CD4-positive, alpha-beta memory T cell (primary cell): ENCODE measurements at regions of chr10 and their contacts with region 1.

Region 1: DNA sequence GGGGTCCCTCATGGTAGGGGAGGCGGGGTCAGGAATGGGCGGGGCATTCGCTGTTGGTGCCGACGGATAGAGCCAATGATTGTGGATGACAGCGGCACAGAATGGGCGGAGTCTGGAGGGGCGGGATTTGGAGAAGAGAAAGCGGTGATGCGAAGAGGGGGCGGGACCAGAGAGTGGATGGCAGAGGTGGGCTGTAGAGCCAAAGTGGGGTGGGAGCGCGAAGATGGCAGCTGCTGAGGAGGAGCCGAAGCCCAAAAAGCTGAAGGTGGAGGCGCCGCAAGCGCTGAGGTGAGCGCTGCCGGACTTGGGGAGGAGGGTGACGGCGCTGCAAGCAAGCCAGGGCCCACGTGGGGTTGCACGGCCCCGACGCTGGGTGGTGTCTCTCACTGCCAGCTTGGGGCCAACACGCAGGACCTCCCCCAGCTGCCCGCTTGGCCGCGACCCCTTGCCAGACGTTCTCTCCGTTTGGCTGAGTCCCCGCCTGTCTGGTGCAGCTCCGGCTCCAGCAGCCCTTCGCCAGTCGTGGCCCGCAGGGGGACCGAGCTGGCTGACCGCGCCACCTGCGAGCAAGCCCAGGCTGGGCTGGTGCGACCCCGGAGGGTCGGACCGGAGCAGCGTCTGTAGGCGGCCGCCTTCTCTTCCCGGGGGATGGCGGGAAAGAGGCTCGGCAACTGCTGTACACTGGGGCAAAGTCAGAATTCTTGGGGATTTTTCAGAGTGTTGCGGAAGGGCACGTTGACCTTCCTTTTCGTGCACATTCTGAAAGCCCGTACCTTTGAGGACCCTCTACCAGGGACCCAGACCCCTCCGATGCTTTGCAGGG is at the start of gene ADK:
- DNase-seq: peak; percentile 99 to 100 (median 99)
- H3K4me3 ChIP-seq: peak within 1 kb of the TSS; percentile 91 to 95
- H3K4me3 Mint-ChIP-seq: no peak within 1 kb of the TSS
- H3K27ac ChIP-seq: peak within 1 kb of the TSS; percentile 84
- H3K27ac Mint-ChIP-seq: peak within 1 kb of the TSS; percentile 7 to 89 (median 78)
- H3K4me1 ChIP-seq: peaks cover 39% of the 10 kb centered on the region
- H3K4me1 Mint-ChIP-seq: peaks cover 24 to 49% (median 36%) of the 10 kb centered on the region in 4 donors
- H3K27me3 ChIP-seq: no peaks in the 10 kb centered on the region
- H3K27me3 Mint-ChIP-seq: no peaks in the 10 kb centered on the region
- total RNA-seq, gene ADK: 33.7 to 38.5 TPM

Region 2: DNA sequence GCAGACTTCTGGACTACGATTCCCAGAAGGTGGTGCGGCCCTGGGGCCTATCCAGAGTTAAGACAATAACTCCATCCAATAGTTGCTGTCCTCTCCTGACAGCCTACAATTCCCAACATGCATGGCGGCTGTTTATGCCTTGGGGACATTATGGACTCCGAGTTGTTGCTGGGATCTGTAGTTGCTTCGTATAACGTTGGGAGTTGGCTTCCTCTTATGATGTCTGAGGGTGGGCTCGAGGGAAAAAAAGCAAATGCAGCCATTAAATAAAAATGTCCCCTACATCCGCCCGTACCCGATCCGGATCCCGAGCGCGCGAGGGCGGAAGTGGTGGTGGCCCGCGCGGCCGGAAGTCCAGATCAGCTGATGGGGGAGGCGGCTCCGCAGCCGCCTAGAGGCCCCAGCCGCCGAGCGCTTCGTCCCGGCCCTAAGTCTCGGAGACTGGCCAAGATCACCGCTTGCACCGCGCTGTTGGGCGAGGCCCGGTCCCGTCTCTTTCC is 366.0 kb before region 1 on chr10 and contains the start of gene ZSWIM8:
- CTCF ChIA-PET with region 1: no interaction called
- POLR2A ChIA-PET with region 1: interaction called, 3 read pairs
- intact Hi-C with region 1: loop called (anchors 1 kb)
- DNase-seq: peak; percentile 85 to 96 (median 89)
- H3K4me3 ChIP-seq: peak within 1 kb of the TSS; percentile 62 to 64
- H3K4me3 Mint-ChIP-seq: peak within 1 kb of the TSS; percentile 94 to 99 (median 98)
- H3K27ac ChIP-seq: peak within 1 kb of the TSS; percentile 77
- H3K27ac Mint-ChIP-seq: peak within 1 kb of the TSS; percentile 95 to 99 (median 99)
- H3K4me1 ChIP-seq: peaks cover 54% of the 10 kb centered on the region
- H3K4me1 Mint-ChIP-seq: peaks cover 35 to 67% (median 50%) of the 10 kb centered on the region in 4 donors
- H3K27me3 ChIP-seq: no peaks in the 10 kb centered on the region
- H3K27me3 Mint-ChIP-seq: peaks cover 2% of the 10 kb centered on the region in 2 donors
- total RNA-seq, gene ZSWIM8: 93.3 to 100 TPM

Region 3: DNA sequence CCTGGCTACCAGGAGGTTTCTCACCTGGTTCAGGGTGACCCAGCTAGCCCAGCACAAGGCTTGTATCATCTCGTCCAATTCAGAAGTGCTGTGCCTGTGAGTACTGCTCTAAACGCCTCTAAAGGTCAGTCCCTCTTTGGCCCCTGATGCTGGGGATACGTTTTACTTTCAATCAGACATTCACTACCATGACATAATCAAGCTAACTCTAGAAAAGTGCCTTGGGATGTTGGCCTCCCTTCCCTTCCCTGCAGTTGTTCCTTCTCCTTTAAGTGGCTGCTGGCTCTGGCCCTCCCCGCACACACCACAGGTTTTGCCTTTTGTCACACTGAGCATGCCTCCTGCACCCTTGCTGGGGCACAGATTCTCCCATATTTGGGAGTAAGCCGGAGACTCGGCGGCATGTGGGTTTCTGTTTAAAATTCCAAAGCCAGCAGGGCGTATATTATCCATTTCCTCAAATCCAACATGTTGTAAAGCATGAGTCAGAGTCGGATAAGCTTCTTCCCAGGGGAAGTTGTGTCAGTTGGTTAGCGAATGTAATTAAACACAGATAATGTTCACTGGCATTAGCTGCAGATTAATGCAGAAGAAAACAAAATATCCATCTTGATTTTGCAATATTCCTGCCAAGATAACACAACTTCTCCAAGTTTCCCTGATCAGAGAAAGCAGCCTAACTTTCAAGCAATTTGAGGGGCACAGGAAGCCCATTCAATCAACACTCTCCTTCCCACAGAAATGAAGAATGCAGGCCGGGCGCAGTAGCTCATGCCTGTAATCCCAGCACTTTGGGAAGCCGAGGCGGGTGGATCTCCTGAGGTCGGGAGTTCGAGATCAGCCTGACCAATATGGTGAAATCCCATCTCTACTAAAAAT is 185.1 kb before region 1 on chr10:
- CTCF ChIA-PET with region 1: no interaction called
- POLR2A ChIA-PET with region 1: no interaction called
- intact Hi-C with region 1: no loop called
- DNase-seq: no peak
- H3K4me3 ChIP-seq: no peak overlapping the region
- H3K4me3 Mint-ChIP-seq: no peak overlapping the region
- H3K27ac ChIP-seq: no peak overlapping the region
- H3K27ac Mint-ChIP-seq: no peak overlapping the region
- H3K4me1 ChIP-seq: peaks cover 4% of the 10 kb centered on the region
- H3K4me1 Mint-ChIP-seq: peaks cover 3 to 17% (median 12%) of the 10 kb centered on the region in 4 donors
- H3K27me3 ChIP-seq: no peaks in the 10 kb centered on the region
- H3K27me3 Mint-ChIP-seq: no peaks in the 10 kb centered on the region

Region 4: DNA sequence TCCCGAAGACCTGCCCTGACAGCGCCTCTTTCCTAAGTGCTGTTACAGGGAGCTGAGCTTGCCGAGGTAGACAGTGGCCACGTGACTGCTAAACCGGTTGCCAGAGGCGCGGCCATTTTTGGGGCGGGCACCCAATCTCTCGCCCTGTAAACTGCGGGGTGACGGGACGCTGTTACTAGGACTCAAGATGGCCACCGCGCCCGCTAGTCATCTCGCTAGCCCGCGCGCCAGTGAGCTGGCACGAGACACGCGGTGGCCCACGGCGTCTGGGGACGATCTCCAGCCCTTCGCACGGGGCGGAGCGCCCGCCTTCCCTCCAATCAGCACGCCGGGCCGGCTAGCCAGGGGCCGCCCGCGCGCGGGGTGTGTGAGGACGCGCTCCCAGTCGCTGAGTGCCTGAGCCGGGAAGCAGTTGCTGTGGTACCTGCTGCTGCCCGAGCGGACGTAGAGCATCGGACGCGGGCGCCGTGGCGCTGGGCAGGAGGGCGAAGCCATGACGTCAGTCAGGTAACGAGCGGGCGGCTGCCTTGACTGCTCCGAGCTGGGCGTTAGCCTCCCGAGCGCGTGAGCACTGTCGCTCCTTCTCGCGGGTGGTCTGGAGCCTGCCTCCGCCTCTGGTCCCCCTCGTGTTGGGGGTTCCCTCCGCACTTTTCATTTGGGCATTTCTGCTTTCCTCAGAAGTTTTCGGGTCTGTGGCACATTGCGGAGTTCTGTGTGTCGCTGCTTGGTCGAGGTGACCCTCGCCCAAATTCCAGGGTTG is 25.3 kb after region 1 on chr10:
- CTCF ChIA-PET with region 1: interaction called, 5 read pairs
- POLR2A ChIA-PET with region 1: interaction called, 46 read pairs
- intact Hi-C with region 1: loop called (anchors 1 kb)
- DNase-seq: peak; percentile 95 to 98 (median 97)
- H3K4me3 ChIP-seq: peak overlapping the region; percentile 82 to 92
- H3K4me3 Mint-ChIP-seq: peak overlapping the region; percentile 90 to 94 (median 93)
- H3K27ac ChIP-seq: peak overlapping the region; percentile 76
- H3K27ac Mint-ChIP-seq: peak overlapping the region; percentile 96 to 98 (median 97)
- H3K4me1 ChIP-seq: peaks cover 42% of the 10 kb centered on the region
- H3K4me1 Mint-ChIP-seq: peaks cover 24 to 49% (median 39%) of the 10 kb centered on the region in 4 donors
- H3K27me3 ChIP-seq: no peaks in the 10 kb centered on the region
- H3K27me3 Mint-ChIP-seq: no peaks in the 10 kb centered on the region

Region 5: DNA sequence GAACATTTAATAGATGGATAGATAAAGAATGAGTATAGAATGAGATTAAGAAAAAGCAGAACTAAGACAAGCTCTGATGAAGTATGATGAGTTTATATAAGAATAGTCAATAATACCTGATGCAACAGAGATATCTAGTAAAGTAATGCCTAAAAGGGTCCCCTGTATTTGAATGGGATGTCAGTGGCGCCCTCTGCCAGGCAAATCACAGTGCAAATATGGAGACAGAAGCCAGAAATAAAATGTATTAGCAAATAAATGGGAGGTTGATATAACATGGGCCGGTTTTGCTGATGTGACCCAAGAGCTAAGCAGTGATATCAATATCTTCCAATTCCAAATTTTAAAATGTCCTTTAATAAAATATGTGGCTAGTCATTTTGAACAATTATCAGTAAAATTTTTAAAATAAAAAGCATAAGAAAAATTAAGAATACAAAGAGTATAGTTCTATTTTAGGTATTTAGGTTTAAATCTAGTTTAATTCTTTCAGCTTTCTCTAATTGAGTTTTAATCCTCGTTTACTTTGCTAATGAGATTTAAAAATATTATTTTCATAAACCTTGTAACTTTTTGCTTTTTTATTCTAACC is 62.4 kb after region 1 on chr10:
- CTCF ChIA-PET with region 1: interaction called, 52 read pairs
- POLR2A ChIA-PET with region 1: interaction called, 10 read pairs
- intact Hi-C with region 1: loop called (anchors 1 kb)
- DNase-seq: peak; percentile 39 to 50 (median 42)
- H3K4me3 ChIP-seq: no peak overlapping the region
- H3K4me3 Mint-ChIP-seq: no peak overlapping the region
- H3K27ac ChIP-seq: no peak overlapping the region
- H3K27ac Mint-ChIP-seq: peak overlapping the region in 1 of 7 donors; percentile 75
- H3K4me1 ChIP-seq: no peaks in the 10 kb centered on the region
- H3K4me1 Mint-ChIP-seq: peaks cover 15 to 22% (median 16%) of the 10 kb centered on the region in 4 donors
- H3K27me3 ChIP-seq: no peaks in the 10 kb centered on the region
- H3K27me3 Mint-ChIP-seq: no peaks in the 10 kb centered on the region

Region 6: DNA sequence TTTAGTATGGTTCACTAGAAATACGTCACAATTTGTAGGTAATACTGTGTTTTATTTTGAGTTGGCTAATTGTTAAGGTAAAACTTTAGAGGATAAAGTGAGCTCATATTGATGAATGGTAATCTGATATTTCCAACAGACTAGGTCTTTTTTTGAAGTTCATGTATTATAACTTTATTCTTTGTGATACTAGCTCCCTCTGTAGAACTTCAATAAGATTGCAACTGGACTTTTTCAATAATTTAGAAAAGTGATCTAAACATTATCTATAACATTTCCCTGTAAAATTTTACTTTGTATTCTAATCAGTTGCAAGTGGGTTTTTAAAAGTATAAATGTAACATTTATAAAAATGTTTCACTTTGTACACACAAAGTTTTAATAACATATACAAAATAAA is 83.3 kb after region 1 on chr10:
- CTCF ChIA-PET with region 1: interaction called, 15 read pairs
- POLR2A ChIA-PET with region 1: interaction called, 12 read pairs
- intact Hi-C with region 1: loop called (anchors 1 kb)
- DNase-seq: peak in 4 of 5 donors; percentile 18 to 39 (median 28)
- H3K4me3 ChIP-seq: no peak overlapping the region
- H3K4me3 Mint-ChIP-seq: no peak overlapping the region
- H3K27ac ChIP-seq: no peak overlapping the region
- H3K27ac Mint-ChIP-seq: peak overlapping the region in 1 of 7 donors; percentile 13
- H3K4me1 ChIP-seq: no peaks in the 10 kb centered on the region
- H3K4me1 Mint-ChIP-seq: peaks cover 0 to 16% (median 8%) of the 10 kb centered on the region in 4 donors
- H3K27me3 ChIP-seq: no peaks in the 10 kb centered on the region
- H3K27me3 Mint-ChIP-seq: no peaks in the 10 kb centered on the region

Region 7: DNA sequence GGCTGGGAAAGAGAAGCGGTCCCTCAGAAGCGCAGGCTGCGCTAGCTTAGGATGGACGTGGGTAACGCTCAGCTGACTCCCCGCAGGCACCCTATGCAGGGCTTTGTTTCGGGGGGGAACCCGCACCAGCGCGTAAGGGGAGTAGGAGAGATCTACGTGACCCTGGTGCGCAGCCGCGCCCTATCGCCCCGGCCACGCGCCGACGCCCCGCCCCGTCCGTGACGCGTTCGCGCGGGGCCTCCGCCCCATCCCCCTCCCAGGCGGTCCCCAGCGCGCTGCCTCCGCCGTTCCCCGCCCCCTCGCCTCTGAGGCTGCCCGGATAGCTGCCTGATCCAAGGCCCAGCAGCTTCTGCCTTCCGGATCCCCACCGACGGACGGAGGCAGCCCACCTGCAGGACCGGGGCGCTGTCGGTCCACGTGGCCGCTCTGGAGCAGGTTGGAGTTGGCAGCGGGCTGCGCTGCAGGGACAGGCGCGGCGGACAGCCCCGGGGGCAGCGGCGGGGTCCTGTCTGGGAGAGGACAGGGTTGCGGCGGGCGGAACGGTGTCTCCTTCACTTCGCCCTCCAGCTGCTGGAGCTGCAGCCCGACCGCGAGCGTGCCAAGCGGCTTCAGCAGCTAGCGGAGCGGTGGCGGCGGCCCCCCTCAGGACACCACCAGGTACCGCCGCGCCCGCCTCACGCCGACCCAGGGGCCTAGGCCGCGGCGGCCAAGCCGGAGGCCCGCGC is 1059.2 kb after region 1 on chr10 and contains the start of gene VDAC2:
- CTCF ChIA-PET with region 1: no interaction called
- POLR2A ChIA-PET with region 1: interaction called, 5 read pairs
- intact Hi-C with region 1: loop called (anchors 1 kb)
- DNase-seq: peak; percentile 94 to 100 (median 98)
- H3K4me3 ChIP-seq: peak within 1 kb of the TSS; percentile 96 to 100
- H3K4me3 Mint-ChIP-seq: peak within 1 kb of the TSS; percentile 98 to 100 (median 100)
- H3K27ac ChIP-seq: peak within 1 kb of the TSS; percentile 97
- H3K27ac Mint-ChIP-seq: peak within 1 kb of the TSS; percentile 96 to 100 (median 100)
- H3K4me1 ChIP-seq: peaks cover 31% of the 10 kb centered on the region
- H3K4me1 Mint-ChIP-seq: peaks cover 18 to 35% (median 26%) of the 10 kb centered on the region in 4 donors
- H3K27me3 ChIP-seq: no peaks in the 10 kb centered on the region
- H3K27me3 Mint-ChIP-seq: no peaks in the 10 kb centered on the region
- total RNA-seq, gene VDAC2: 76.9 to 79.0 TPM